B cell (primary cell): ENCODE measurements at regions of chr9 and their contacts with region 1.

Region 1: DNA sequence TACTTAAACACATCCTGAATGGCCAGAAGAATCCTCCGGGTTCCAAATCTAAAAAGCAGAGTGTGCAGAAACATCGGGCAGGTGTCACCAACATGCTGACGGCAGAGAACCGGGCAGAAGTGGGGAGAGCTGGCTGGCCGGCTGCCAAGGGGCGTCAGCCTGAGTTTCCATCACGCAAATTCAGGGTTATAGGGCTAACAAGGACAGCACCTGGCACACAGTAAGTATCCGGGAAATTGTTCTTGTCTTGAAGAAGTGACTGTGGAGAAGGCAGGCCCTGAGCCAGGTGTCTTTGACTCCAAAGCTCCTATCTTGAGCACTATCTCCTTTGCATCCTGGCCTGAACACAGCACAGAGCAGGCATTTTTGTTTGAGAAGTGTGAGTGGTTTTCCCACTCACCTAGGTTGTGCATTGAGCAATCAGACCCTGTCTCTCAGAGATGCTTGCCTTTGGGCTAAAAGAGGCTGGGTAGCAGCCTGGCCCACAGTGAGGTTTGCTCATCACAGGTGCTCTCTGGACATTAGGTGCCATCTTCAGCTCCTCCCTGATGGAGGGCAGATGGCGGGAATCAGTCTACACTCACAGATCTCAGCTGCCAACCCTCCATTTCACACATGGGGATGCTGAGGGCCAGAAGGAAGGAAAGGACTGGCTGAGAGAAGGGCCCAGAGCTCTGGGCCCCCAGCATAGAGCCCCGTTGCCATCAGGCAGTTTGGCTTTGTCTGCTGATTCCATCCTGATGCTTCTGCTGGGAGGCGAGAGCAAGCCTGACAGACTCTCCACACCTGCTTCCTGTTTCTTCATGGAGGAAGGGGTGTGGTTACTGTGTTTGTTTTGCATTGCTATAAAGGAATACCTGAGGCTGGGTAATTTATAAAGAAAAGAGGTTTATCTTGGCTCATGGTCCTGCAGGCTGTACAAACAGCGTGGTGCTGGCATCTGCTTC is 52.8 kb downstream of the WHRN start:
- DNase-seq: peak; percentile 82
- ATAC-seq: peak; percentile 46
- H3K4me3 ChIP-seq: peak overlapping the region in 3 of 5 experiments; percentile 1 to 44 (median 6)
- H3K4me3 Mint-ChIP-seq: peak overlapping the region; percentile 80
- H3K27ac ChIP-seq: peak overlapping the region; percentile 87 to 92
- H3K27ac Mint-ChIP-seq: peak overlapping the region; percentile 97
- H3K4me1 ChIP-seq: peaks cover 57 to 58% of the 10 kb centered on the region in 2 donors
- H3K4me1 Mint-ChIP-seq: peaks cover 57% of the 10 kb centered on the region
- H3K27me3 ChIP-seq: no peaks in the 10 kb centered on the region
- H3K27me3 Mint-ChIP-seq: no peaks in the 10 kb centered on the region
- CTCF ChIP-seq: no peak

Region 2: DNA sequence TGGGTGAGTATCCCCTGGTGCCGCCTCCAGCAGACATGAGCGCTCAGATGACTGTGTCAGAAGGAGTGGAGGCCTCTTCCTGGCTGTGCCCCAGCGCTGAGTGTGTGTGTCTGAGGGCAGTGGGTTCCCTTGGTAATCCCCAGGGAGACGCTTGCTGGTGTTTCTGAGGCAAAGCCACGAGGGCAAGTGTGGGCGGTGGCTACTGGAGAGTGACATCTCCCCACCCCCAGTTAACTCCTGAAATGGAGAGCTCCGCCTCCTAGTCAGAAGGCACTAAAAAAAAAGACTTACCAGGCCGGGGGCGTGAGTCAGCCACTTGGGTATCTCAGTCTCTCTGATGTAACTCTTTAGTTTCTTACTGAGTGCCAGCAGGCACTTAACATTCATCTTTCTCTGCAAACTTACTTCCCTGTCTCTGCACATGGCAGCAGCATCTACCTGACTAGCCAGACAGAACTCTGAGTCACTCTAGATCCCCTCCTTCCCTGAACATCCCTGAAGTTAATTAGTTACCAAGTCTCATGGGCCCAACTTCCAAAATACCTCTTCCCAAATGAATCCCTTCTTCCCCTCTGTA is 103.5 kb before region 1 on chr9:
- CTCF ChIA-PET with region 1: interaction called, 3 read pairs
- POLR2A ChIA-PET with region 1: no interaction called
- intact Hi-C with region 1: loop called (anchors 1 kb)
- DNase-seq: peak; percentile 91
- ATAC-seq: peak; percentile 94
- H3K4me3 ChIP-seq: no peak overlapping the region
- H3K4me3 Mint-ChIP-seq: peak overlapping the region; percentile 83
- H3K27ac ChIP-seq: peak overlapping the region; percentile 68 to 80
- H3K27ac Mint-ChIP-seq: peak overlapping the region; percentile 97
- H3K4me1 ChIP-seq: peaks cover 26 to 36% of the 10 kb centered on the region in 2 donors
- H3K4me1 Mint-ChIP-seq: peaks cover 44% of the 10 kb centered on the region
- H3K27me3 ChIP-seq: no peaks in the 10 kb centered on the region
- H3K27me3 Mint-ChIP-seq: no peaks in the 10 kb centered on the region
- CTCF ChIP-seq: no peak

Region 3: DNA sequence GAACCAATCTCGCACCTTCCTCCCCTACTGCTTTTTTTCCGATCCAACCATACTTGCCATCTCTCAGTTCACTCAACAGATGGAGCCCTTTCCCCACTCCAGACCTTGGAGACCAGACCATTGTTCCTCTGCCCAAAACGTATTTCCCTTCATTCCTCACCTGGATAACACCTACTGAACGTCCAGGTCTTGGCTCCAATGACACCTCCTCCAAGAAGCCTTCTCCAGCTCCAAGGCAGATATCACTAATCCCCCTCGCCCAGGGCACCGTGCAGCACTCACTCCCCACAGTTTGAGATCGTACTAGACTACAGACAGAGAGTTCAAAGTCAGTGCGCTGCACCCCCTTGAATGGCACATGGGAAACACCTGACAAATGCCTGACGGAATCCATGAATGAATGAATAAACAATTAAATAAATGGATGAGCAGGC is 17.6 kb before region 1 on chr9:
- CTCF ChIA-PET with region 1: interaction called, 33 read pairs
- POLR2A ChIA-PET with region 1: interaction called, 4 read pairs
- intact Hi-C with region 1: loop called (anchors 1 kb)
- DNase-seq: peak; percentile 70
- ATAC-seq: peak; percentile 76
- H3K4me3 ChIP-seq: no peak overlapping the region
- H3K4me3 Mint-ChIP-seq: no peak overlapping the region
- H3K27ac ChIP-seq: no peak overlapping the region
- H3K27ac Mint-ChIP-seq: no peak overlapping the region
- H3K4me1 ChIP-seq: no peaks in the 10 kb centered on the region
- H3K4me1 Mint-ChIP-seq: peaks cover 2% of the 10 kb centered on the region
- H3K27me3 ChIP-seq: peaks cover 0 to under 1% (median 0%) of the 10 kb centered on the region in 4 experiments
- H3K27me3 Mint-ChIP-seq: peaks cover 5% of the 10 kb centered on the region
- CTCF ChIP-seq: peak; percentile 72

Region 4: GRCh38 chr9:114505187-114506081 is 52.9 kb after region 1 on chr9 and contains the start of gene WHRN:
- CTCF ChIA-PET with region 1: interaction called, 46 read pairs
- POLR2A ChIA-PET with region 1: interaction called, 3 read pairs
- intact Hi-C with region 1: loop called (anchors 1 kb)
- DNase-seq: peak; percentile 95
- ATAC-seq: peak; percentile 85
- H3K4me3 ChIP-seq: peak within 1 kb of the TSS; percentile 53 to 77 (median 65)
- H3K4me3 Mint-ChIP-seq: peak within 1 kb of the TSS; percentile 90
- H3K27ac ChIP-seq: peak within 1 kb of the TSS in 1 of 2 donors; percentile 62
- H3K27ac Mint-ChIP-seq: peak within 1 kb of the TSS; percentile 90
- H3K4me1 ChIP-seq: peaks cover 29 to 41% of the 10 kb centered on the region in 2 donors
- H3K4me1 Mint-ChIP-seq: peaks cover 43% of the 10 kb centered on the region
- H3K27me3 ChIP-seq: peaks cover 0 to 17% (median 9%) of the 10 kb centered on the region in 4 experiments
- H3K27me3 Mint-ChIP-seq: peaks cover 29% of the 10 kb centered on the region
- CTCF ChIP-seq: no peak
- total RNA-seq, gene WHRN: 95.7 and 96.6 TPM in 2 replicates

Region 5: DNA sequence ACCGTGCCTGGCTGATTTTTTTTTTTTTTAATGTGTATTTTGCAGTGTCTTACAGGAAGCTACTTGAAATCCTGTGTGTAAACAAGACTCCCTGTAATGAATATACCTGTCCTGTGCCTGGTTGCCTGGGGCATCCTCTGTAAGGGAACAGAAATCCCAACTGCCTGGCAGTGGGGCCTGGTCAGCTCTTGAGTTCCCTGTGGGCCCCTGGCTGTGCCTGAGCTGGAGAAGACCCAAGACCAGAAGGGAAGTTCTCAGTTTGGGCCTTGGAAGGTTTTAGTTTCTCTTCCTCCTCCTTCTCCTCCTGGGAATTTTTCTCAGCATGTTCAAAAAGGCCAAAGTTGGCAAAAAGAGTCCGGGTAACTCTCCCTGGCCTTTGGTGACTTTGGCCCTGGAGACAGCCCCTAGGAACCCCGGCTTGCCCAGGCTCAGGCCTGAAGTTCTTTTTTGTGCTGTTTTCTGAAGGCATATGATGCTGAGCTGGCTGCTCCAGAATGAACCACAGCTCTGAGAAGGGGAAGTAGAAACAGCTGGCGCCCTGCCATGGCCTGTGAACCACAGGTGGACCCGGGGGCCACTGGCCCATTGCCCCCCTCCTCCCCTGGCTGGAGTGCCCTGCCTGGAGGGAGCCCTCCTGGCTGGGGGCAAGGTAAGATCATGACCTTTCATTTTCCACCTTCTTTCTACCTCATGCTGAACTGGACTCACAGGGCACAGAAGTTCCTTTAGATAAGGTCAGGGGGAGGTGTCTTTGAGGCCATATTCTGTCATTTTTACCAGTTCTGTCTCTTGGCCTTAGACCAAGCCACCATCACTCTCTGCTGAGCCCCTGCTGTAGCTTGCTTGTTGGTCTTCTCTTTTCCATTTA is 164.4 kb after region 1 on chr9:
- CTCF ChIA-PET with region 1: no interaction called
- POLR2A ChIA-PET with region 1: no interaction called
- intact Hi-C with region 1: loop called (anchors 1 kb)
- DNase-seq: peak; percentile 88
- ATAC-seq: peak; percentile 80
- H3K4me3 ChIP-seq: peak overlapping the region in 1 of 5 experiments; percentile 18
- H3K4me3 Mint-ChIP-seq: peak overlapping the region; percentile 79
- H3K27ac ChIP-seq: peak overlapping the region; percentile 81 to 89
- H3K27ac Mint-ChIP-seq: peak overlapping the region; percentile 98
- H3K4me1 ChIP-seq: peaks cover 74 to 94% of the 10 kb centered on the region in 2 donors
- H3K4me1 Mint-ChIP-seq: peaks cover 72% of the 10 kb centered on the region
- H3K27me3 ChIP-seq: no peaks in the 10 kb centered on the region
- H3K27me3 Mint-ChIP-seq: no peaks in the 10 kb centered on the region
- CTCF ChIP-seq: no peak

Region 6: DNA sequence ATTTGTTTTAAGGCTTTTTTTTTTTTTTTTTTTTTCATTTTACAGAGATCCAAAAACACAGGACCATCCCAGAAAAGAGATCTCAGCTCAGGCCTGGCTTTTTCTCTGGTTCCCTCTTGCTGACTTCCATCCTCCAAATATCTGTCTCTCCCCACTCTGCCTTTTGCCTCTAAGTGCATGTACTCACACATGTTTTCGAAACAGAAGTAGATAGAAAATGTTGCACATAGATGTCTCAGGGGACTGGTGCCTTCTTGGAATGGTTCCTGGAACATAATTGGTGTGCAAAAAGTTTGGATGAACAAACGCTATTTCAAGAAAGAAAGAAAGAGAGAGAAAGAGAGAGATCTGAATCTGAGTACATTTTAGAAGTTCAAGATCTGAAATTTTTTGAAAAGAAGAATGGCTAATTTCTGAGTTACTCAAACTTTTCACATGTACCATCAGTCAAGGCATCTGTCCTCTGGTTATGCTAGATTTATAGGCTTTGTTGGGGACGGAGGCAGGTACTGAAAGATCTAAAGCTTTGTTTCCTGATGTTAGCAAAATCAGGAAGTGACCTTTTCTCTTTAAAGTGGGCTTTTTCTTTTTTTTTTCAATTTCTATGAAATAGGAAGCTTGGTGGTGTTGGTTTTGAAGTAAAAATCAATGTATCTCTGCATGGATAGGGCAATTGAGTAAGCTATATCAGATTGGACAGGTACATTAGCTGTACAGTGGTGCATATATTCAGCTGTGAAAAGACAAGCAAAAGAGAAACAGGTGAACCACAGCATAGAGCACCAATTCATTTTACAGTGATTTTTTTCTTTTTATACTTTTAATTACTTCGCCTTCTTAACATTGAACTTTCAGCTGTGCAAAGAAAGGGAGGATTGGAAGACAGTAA is 486.4 kb after region 1 on chr9:
- CTCF ChIA-PET with region 1: no interaction called
- POLR2A ChIA-PET with region 1: no interaction called
- intact Hi-C with region 1: no loop called
- DNase-seq: no peak
- ATAC-seq: no peak
- H3K4me3 ChIP-seq: no peak overlapping the region
- H3K4me3 Mint-ChIP-seq: no peak overlapping the region
- H3K27ac ChIP-seq: no peak overlapping the region
- H3K27ac Mint-ChIP-seq: no peak overlapping the region
- H3K4me1 ChIP-seq: peaks cover 5 to 8% of the 10 kb centered on the region in 2 donors
- H3K4me1 Mint-ChIP-seq: peaks cover 8% of the 10 kb centered on the region
- H3K27me3 ChIP-seq: no peaks in the 10 kb centered on the region
- H3K27me3 Mint-ChIP-seq: no peaks in the 10 kb centered on the region
- CTCF ChIP-seq: no peak